ENCODE measurements at regions of chr17 and their contacts with region 1.

Region 1: DNA sequence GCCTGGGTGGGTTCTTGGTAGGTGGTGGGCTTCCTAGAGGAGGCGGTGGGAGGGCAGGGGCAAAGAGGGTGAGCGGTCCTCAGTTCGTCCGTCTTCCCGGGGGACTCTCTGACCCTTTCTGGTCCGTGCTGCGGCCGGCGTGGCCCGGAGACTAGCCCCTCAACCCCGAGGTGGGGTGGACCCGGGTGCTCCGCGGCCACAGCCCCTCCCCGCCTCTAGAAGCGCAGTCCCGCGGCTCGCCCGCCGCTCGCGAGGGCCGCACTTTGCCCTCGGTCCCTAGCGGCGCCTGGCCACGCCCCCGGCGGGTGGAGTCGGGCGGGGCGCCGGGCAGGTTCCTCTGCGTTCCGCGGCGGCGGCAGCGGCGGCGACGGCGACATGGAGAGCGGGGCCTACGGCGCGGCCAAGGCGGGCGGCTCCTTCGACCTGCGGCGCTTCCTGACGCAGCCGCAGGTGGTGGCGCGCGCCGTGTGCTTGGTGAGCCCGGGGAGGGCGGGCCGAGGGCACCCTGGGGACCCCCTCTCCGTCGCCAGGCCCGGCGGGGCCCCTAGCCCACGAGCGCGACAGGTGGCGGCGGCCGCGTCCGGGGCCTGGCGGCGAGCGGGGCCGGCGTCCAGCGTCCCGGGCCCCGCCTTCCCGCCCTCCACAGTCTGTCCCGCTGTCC is at the start of gene SYNGR2:
- DNase-seq: peak; percentile 63
- ATAC-seq: peak; percentile 72
- H3K4me3 ChIP-seq: peak within 1 kb of the TSS; percentile 83
- H3K27ac ChIP-seq: peak within 1 kb of the TSS; percentile 85
- H3K4me1 ChIP-seq: peaks cover 18 to 49% of the 10 kb centered on the region in 2 experiments; a peak in 3 of 4 replicates
- H3K27me3 ChIP-seq: no peaks in the 10 kb centered on the region
- CTCF ChIP-seq: no peak
- POLR2A ChIP-seq: peak; percentile 84
- RAD21 ChIP-seq: no peak
- total RNA-seq, gene SYNGR2: 148 TPM

Region 2: DNA sequence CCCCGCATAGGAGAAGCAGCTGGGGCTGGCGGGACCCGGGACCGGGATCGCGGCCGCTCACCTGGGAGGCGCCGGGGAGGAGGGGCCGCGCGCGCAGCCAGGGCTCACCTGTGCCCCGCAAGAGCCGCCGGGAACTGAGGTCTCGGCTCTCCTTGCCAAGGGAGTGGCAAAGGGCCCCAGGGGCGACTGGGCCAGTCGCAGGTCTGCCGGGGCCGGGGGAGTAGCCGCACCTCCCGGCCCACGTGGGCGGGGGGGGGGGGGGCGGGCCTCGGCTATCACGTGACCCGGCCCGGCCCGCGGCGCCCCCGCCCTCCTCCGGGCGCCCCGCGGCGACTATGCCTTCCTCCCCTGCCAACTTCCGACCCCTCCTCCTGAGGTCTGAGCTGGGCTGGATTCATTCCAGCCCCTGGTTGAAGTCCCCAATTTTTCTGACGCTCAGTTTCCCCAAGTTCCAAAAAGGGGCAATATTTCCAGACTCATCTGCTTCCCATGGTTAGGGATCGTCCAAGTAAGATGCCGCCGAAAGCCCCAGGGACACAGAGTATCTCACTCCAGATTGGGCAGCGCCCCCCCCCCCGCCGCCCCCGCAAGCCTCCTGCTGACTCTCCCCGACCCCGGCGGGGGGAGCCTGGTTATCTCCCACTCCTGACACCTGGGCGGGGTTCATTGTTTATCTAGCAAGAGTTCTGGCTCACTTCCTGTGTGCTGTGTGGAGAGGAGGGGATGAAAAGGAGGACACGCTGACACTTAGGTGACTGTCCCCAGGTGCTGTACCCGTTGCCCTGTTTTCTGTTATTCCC is 39.6 kb before region 1 on chr17 and contains the start of gene TMC6:
- CTCF ChIA-PET with region 1: no interaction called
- POLR2A ChIA-PET with region 1: interaction called, 11 read pairs
- RAD21 ChIA-PET with region 1: no interaction called
- intact Hi-C with region 1: no loop called
- DNase-seq: peak; percentile 64
- ATAC-seq: peak; percentile 81
- H3K4me3 ChIP-seq: peak within 1 kb of the TSS; percentile 89 to 92
- H3K27ac ChIP-seq: peak within 1 kb of the TSS; percentile 95
- H3K4me1 ChIP-seq: peaks cover 39 to 62% of the 10 kb centered on the region in 2 experiments
- H3K27me3 ChIP-seq: no peaks in the 10 kb centered on the region
- CTCF ChIP-seq: no peak
- POLR2A ChIP-seq: peak; percentile 19
- RAD21 ChIP-seq: no peak
- total RNA-seq, gene TMC6: 142 TPM

Region 3: DNA sequence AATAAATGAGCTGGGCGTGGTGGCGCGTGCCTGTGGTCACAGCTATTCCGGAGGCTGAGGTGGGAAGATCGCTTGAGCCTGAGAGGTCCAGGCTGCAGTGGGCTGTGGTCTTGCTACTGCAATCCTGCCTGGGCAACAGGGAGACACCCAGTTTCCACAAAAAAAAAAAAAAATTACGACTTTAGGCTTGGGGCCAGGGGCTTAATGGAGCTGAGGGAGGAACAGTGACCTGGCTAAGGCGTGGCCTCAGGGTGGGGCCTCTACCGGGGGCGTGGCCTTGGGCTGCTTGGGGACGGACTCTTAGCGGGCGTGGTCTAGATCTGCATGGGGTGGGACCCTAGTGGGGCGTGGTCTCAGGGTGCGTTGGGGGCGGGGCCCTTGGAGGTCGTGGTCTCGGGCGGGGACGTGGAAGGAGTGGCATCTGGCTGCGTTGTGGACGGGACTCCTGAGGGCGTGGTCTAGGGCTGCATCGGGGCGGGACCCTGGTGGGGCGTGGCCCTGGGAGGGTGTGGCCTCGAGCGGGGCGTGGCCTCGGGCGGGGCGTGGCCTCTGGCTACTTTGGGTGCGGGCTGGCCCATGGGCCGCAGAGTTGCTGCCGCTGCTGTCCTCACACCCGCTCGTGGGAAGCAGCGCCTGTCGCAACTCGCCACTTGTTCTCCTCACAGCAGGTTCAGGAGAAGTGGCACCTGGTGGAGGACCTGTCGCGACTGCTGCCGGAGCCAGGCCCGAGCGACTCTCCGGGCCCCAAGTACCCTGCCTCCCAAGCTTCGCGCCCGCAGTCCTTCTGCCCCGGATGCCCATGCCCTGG is 28.0 kb before region 1 on chr17:
- CTCF ChIA-PET with region 1: interaction called, 5 read pairs
- POLR2A ChIA-PET with region 1: interaction called, 16 read pairs
- RAD21 ChIA-PET with region 1: interaction called in 1 of 2 experiments, 6 read pairs
- intact Hi-C with region 1: loop called (anchors 2 kb)
- DNase-seq: peak; percentile 100
- ATAC-seq: peak; percentile 79
- H3K4me3 ChIP-seq: peak overlapping the region; percentile 37 to 53
- H3K27ac ChIP-seq: peak overlapping the region; percentile 75
- H3K4me1 ChIP-seq: peaks cover 57 to 82% of the 10 kb centered on the region in 2 experiments
- H3K27me3 ChIP-seq: no peaks in the 10 kb centered on the region
- CTCF ChIP-seq: no peak
- POLR2A ChIP-seq: no peak
- RAD21 ChIP-seq: no peak

Region 4: DNA sequence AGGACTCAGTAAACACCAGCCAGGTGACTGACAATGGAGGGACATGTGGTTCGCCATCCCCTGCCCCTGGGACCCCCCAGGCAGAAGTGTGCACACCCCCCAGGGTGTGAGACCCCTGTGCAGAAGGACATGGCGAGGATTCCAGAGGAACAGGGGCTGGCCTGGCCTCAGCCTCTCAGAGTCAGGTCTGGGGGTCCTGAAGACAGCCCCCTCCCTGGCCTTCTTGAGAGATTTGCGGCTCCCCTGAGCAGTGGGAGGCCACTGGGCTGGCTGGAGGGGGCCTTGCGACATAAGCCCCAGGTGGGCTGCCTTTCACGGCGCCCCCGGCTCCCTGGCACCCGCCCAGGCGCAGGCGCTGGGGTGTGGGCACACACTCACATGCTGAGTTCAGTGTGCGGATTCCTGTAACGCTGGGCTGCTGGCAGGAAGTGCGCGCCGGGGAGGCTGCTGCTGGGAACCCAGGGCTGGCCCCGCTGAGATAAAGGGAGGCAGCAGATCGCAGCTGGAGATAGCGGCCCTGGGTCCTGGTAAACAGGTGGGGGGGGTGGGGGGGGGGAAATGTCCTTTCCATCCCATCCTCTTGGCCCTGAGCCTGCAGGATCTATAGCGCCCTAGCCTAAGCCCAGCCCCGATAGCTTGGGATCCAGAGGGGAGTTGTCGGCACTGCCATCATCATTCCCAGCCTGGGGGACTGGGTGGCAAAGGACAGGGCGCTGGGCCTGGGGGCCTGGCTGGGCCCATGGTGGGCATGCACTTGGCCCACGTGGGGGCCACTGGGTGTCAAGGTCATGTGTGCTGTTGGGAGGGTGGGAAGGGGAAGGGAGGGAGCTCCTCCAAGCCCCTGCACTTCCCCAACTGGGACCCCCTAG is 90.2 kb after region 1 on chr17:
- CTCF ChIA-PET with region 1: no interaction called
- POLR2A ChIA-PET with region 1: no interaction called
- RAD21 ChIA-PET with region 1: no interaction called
- intact Hi-C with region 1: no loop called
- DNase-seq: no peak
- ATAC-seq: no peak
- H3K4me3 ChIP-seq: no peak overlapping the region
- H3K27ac ChIP-seq: no peak overlapping the region; the same call in 1 of the 2 replicates
- H3K4me1 ChIP-seq: peaks cover 0 to 6% of the 10 kb centered on the region in 2 experiments; a peak in 1 of 4 replicates
- H3K27me3 ChIP-seq: no peaks in the 10 kb centered on the region
- CTCF ChIP-seq: no peak
- POLR2A ChIP-seq: no peak
- RAD21 ChIP-seq: no peak

Region 5: GRCh38 chr17:78979780-78980623 is 811.6 kb after region 1 on chr17 and contains the start of gene LGALS3BP:
- CTCF ChIA-PET with region 1: no interaction called
- POLR2A ChIA-PET with region 1: no interaction called
- RAD21 ChIA-PET with region 1: no interaction called
- intact Hi-C with region 1: loop called (anchors 5 kb)
- DNase-seq: peak; percentile 70
- ATAC-seq: peak; percentile 90
- H3K4me3 ChIP-seq: peak within 1 kb of the TSS; percentile 81 to 83
- H3K27ac ChIP-seq: peak within 1 kb of the TSS; percentile 66
- H3K4me1 ChIP-seq: peaks cover 35 to 52% of the 10 kb centered on the region in 2 experiments
- H3K27me3 ChIP-seq: no peaks in the 10 kb centered on the region
- CTCF ChIP-seq: no peak
- POLR2A ChIP-seq: peak; percentile 86
- RAD21 ChIP-seq: no peak
- total RNA-seq, gene LGALS3BP: 389 TPM